ENCODE measurements at regions of chr7 and their contacts with region 1.

Region 1: GRCh38 chr7:43602271-43602670 is 19.4 kb downstream of the STK17A start:
- DNase-seq: no peak
- ATAC-seq: no peak
- H3K4me3 ChIP-seq: no peak overlapping the region
- H3K4me3 Mint-ChIP-seq: no peak overlapping the region
- H3K27ac ChIP-seq: peak overlapping the region; percentile 49
- H3K27ac Mint-ChIP-seq: no peak overlapping the region
- H3K4me1 ChIP-seq: peaks cover 63 to 65% of the 10 kb centered on the region in 2 donors
- H3K4me1 Mint-ChIP-seq: peaks cover 26 to 50% (median 29%) of the 10 kb centered on the region in 7 donors
- H3K27me3 ChIP-seq: no peaks in the 10 kb centered on the region
- H3K27me3 Mint-ChIP-seq: no peaks in the 10 kb centered on the region

Region 2: DNA sequence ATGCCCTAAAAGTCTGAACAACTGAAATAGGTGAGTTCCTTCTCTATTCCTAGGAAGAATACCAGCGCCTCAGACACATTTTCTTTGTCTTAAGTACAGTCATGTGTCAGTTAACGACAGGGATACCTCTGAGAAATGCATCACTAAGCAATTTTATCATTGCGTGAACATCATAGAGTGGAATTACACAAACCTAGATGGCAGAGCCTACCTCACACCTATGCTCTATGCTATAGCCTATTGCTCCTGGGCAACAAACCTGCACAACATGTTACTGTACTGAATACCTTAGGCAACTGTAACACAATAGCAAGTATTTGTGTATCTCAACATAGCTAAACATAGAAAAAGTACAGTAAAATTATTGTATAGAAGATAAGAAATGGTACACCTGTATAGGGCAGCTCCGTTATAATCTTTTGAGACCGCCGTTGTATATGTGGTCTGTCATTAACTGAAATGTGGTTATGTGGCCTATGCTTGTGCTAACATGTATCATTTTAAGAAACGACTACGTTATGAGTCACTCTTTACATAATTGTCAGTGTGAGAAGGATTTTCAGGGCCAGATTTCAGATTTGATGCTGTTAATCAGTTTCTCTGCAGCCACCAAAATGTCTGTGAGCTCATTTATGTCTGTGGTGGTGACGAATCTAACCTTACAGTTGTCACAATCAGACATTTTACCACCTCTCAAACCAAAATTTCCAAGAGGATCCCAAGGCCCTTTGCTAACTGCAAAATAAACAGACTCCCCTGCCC is 85.5 kb before region 1 on chr7:
- CTCF ChIA-PET with region 1: no interaction called
- POLR2A ChIA-PET with region 1: no interaction called
- intact Hi-C with region 1: no loop called
- DNase-seq: no peak
- ATAC-seq: no peak
- H3K4me3 ChIP-seq: no peak overlapping the region
- H3K4me3 Mint-ChIP-seq: no peak overlapping the region
- H3K27ac ChIP-seq: no peak overlapping the region
- H3K27ac Mint-ChIP-seq: no peak overlapping the region
- H3K4me1 ChIP-seq: no peaks in the 10 kb centered on the region
- H3K4me1 Mint-ChIP-seq: peaks cover 0 to 14% (median 0%) of the 10 kb centered on the region in 7 donors
- H3K27me3 ChIP-seq: peaks cover 0 to 3% of the 10 kb centered on the region in 2 donors
- H3K27me3 Mint-ChIP-seq: peaks cover 6 to 17% (median 9%) of the 10 kb centered on the region in 5 donors

Region 3: DNA sequence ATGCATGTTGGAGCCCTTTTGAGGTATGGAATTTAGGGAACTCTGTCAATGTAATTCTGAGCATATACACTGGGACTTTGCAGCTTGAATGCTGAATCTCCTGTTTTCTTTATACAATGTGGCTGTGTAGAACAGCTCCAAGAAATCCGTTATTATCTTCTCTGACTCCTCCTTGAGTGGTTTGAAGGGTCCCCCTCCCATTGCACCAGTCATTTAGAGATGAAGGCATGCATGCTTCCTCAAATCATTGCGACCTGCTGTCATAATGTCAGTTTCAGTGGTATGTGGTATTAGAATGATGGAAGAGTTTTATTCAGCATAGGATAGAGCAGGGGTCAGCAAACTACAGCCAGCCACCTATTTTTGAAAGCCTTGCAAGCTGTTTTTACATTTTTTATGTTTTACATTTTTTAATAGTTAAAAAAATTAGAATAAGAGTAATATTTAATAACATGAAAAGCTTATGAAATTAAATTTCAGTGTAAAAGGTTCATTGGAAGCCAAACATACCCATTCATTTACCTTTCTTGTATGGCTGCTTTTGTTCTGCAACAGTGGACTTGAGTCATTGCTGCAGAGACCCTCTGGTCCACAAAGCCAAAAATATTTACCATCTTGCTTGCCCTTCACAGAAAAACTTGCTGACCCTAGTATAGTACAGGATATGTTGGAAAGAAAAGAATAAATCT is 11.3 kb before region 1 on chr7:
- CTCF ChIA-PET with region 1: interaction called, 4 read pairs
- POLR2A ChIA-PET with region 1: interaction called, 13 read pairs
- intact Hi-C with region 1: loop called (anchors 1 to 2 kb)
- DNase-seq: peak in 1 of 9 donors; percentile 27
- ATAC-seq: no peak
- H3K4me3 ChIP-seq: peak overlapping the region; percentile 33
- H3K4me3 Mint-ChIP-seq: peak overlapping the region; percentile 62 to 92 (median 78)
- H3K27ac ChIP-seq: peak overlapping the region; percentile 67
- H3K27ac Mint-ChIP-seq: peak overlapping the region; percentile 15 to 94 (median 85)
- H3K4me1 ChIP-seq: peaks cover 77 to 78% of the 10 kb centered on the region in 2 donors
- H3K4me1 Mint-ChIP-seq: peaks cover 55 to 91% (median 80%) of the 10 kb centered on the region in 7 donors
- H3K27me3 ChIP-seq: no peaks in the 10 kb centered on the region
- H3K27me3 Mint-ChIP-seq: no peaks in the 10 kb centered on the region

Region 4: DNA sequence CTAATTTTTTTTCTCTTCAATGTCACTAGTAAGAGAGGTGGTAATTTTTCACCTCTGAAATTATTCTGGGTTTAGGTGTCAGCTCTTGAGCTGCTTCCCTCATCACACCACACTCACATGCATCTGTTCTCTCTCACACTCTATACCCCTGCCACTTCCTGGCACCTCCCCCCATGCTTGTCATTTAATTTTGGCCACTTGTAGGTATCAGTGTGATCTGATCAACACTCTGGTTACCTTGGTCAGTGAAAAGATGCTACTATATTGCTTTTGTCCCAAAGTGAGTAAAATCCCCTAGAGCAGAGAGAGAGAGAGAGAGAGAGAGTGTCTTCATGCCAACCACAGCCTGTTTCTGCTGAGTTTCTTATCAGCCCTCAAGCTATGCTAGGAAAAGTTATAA is 23.2 kb after region 1 on chr7:
- CTCF ChIA-PET with region 1: interaction called, 6 read pairs
- POLR2A ChIA-PET with region 1: interaction called, 8 read pairs
- intact Hi-C with region 1: loop called in 1 of 2 experiments (anchors 1 kb)
- DNase-seq: peak in 7 of 9 donors; percentile 56 to 75 (median 68)
- ATAC-seq: peak; percentile 89
- H3K4me3 ChIP-seq: no peak overlapping the region
- H3K4me3 Mint-ChIP-seq: peak overlapping the region in 9 of 10 donors; percentile 54 to 90 (median 76)
- H3K27ac ChIP-seq: peak overlapping the region; percentile 63
- H3K27ac Mint-ChIP-seq: peak overlapping the region in 7 of 9 donors; percentile 71 to 97 (median 90)
- H3K4me1 ChIP-seq: peaks cover 65 to 76% of the 10 kb centered on the region in 2 donors
- H3K4me1 Mint-ChIP-seq: peaks cover 3 to 96% (median 76%) of the 10 kb centered on the region in 7 donors
- H3K27me3 ChIP-seq: no peaks in the 10 kb centered on the region
- H3K27me3 Mint-ChIP-seq: no peaks in the 10 kb centered on the region

Measured in naive thymus-derived CD4-positive, alpha-beta T cell (primary cell).